BJ (cell line): ENCODE measurements at regions of chr5 and their contacts with region 1.

Region 1: GRCh38 chr5:72366324-72366976 is 46.3 kb downstream of the PTCD2 start:
- DNase-seq: no peak
- H3K4me3 ChIP-seq: no peak overlapping the region
- H3K27me3 ChIP-seq: no peaks in the 10 kb centered on the region
- CTCF ChIP-seq: peak; percentile 80

Region 2: GRCh38 chr5:72355706-72356299 is 10.6 kb before region 1 on chr5:
- CTCF ChIA-PET with region 1: interaction called, 16 read pairs
- POLR2A ChIA-PET with region 1: no interaction called
- DNase-seq: no peak
- H3K4me3 ChIP-seq: no peak overlapping the region
- H3K27me3 ChIP-seq: no peaks in the 10 kb centered on the region
- CTCF ChIP-seq: peak; percentile 61

Region 3: GRCh38 chr5:72412283-72413055 is 46.0 kb after region 1 on chr5:
- CTCF ChIA-PET with region 1: interaction called, 23 read pairs
- POLR2A ChIA-PET with region 1: no interaction called
- DNase-seq: peak; percentile 39
- H3K4me3 ChIP-seq: no peak overlapping the region
- H3K27me3 ChIP-seq: no peaks in the 10 kb centered on the region
- CTCF ChIP-seq: peak; percentile 60

Region 4: GRCh38 chr5:72518001-72518683 is 151.7 kb after region 1 on chr5:
- CTCF ChIA-PET with region 1: interaction called, 65 read pairs
- POLR2A ChIA-PET with region 1: no interaction called
- DNase-seq: no peak
- H3K4me3 ChIP-seq: no peak overlapping the region
- H3K27me3 ChIP-seq: no peaks in the 10 kb centered on the region
- CTCF ChIP-seq: no peak

Region 5: DNA sequence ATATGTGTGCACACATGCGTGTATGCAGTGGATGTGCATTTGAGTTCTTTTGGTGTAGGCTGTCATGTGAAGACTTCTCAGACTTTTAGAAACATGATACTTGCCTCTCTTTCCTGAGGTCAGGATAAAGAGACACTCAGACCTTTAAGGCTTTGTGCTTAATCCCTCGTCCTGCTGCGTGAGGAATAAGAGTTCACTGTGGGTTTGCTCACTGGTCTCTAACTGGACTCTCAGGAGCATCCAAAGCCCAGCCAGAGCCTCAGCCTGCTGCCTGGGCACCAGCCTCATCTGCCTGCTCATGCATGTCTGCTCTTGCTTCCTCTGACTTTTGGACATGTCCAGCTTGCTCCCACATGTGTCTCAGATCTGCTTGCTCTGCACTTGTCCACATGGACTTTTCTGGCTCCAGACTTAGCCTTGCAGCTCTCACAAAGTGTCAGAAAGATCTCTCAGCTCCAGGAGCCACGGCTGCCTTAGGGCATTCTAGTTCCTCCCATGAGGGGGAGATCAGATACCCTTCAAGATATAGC is 205.9 kb after region 1 on chr5:
- CTCF ChIA-PET with region 1: no interaction called
- POLR2A ChIA-PET with region 1: no interaction called
- DNase-seq: no peak
- H3K4me3 ChIP-seq: no peak overlapping the region
- H3K27me3 ChIP-seq: peaks cover 1% of the 10 kb centered on the region
- CTCF ChIP-seq: no peak

Region 6: GRCh38 chr5:72816311-72817145 is 450.1 kb after region 1 on chr5 and contains the start of gene TNPO1:
- CTCF ChIA-PET with region 1: interaction called, 22 read pairs
- POLR2A ChIA-PET with region 1: no interaction called
- DNase-seq: peak; percentile 61
- H3K4me3 ChIP-seq: peak within 1 kb of the TSS; percentile 92
- H3K27me3 ChIP-seq: no peaks in the 10 kb centered on the region
- CTCF ChIP-seq: no peak
- polyA plus RNA-seq, gene TNPO1: 49.6 and 106 TPM in 2 replicates